A673 (cell line): ENCODE measurements at regions of chr11 and their contacts with region 1.

Region 1: DNA sequence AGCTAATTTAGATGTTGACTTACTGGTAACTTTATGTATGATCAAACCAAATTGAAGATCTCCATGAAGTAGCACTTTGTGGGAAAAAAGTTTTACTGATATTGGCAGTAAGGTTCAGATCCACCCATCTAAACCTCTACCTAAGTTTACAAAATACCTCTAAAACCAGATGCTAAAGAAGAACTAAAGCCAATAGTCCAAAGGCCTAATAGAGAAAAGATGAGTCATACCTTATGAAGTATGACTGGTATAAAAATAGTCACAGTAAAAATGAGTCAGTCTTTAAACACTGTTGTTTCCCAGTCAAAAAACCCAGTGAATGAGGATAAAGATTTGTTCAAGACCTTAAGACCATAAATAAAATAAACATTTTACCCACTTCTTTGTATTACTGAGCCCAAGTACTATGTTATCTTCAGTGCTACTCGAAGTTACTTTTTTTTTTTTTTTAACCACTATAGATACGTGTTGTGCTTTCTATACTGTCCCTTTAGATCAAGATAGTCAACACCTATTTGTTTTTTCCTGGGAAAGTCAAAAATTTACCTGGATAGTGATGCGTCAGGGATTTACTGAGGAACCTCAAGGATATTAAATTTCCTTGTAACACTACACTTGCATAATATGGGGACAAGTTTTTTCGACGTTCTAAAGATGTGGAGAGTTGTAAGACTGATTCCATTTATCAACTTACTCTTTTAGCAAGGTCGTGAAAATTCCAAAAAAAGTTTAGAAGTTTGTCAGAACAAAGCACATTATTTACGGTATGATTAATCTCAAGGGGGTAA is 87.3 kb downstream of the CCDC73 start:
- DNase-seq: peak; percentile 37
- H3K4me3 ChIP-seq: no peak overlapping the region
- H3K27ac ChIP-seq: no peak overlapping the region
- H3K4me1 ChIP-seq: no peaks in the 10 kb centered on the region
- H3K27me3 ChIP-seq: no peaks in the 10 kb centered on the region
- CTCF ChIP-seq: no peak

Region 2: GRCh38 chr11:31856248-31856647 is 850.9 kb before region 1 on chr11:
- CTCF ChIA-PET with region 1: no interaction called
- POLR2A ChIA-PET with region 1: no interaction called
- intact Hi-C with region 1: no loop called
- DNase-seq: no peak
- H3K4me3 ChIP-seq: no peak overlapping the region
- H3K27ac ChIP-seq: no peak overlapping the region
- H3K4me1 ChIP-seq: no peaks in the 10 kb centered on the region
- H3K27me3 ChIP-seq: peaks cover 33% of the 10 kb centered on the region
- CTCF ChIP-seq: no peak

Region 3: DNA sequence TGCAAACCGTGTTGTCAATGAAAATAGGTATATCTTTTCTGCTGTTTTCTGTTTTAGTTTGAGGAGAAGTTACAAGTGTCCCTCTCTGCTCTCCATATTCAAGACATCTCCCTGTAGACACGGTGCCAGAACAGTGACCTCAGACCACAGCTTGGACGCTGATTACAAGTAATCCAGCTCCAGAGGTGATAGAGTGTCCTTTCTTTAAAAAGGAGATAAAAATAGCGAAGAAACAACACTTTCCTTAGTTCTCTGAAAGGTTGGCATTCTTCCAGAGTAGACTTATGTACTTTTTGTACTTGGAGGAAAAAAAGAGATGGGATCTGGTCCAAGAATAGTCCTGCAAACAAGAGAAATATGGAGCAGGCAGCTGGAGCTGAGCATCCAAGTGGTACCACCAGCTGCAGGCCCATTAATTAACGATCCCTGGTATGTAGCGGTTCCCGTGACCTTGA is 228.8 kb before region 1 on chr11:
- CTCF ChIA-PET with region 1: interaction called, 10 read pairs
- POLR2A ChIA-PET with region 1: no interaction called
- intact Hi-C with region 1: no loop called
- DNase-seq: no peak
- H3K4me3 ChIP-seq: no peak overlapping the region
- H3K27ac ChIP-seq: no peak overlapping the region
- H3K4me1 ChIP-seq: no peaks in the 10 kb centered on the region
- H3K27me3 ChIP-seq: peaks cover 56% of the 10 kb centered on the region
- CTCF ChIP-seq: no peak